ENCODE measurements at regions of chr12 and their contacts with region 1.

Region 1: GRCh38 chr12:93025145-93025805 is 96.2 kb upstream of the EEA1 start:
- DNase-seq: peak; percentile 28 to 74 (median 44)
- ATAC-seq: peak; percentile 82
- H3K4me3 ChIP-seq: no peak overlapping the region
- H3K27ac ChIP-seq: no peak overlapping the region
- H3K4me1 ChIP-seq: peaks cover 0 to 23% of the 10 kb centered on the region in 2 experiments; a peak in 3 of 5 replicates
- H3K27me3 ChIP-seq: no peaks in the 10 kb centered on the region
- CTCF ChIP-seq: peak; percentile 58 to 82 (median 66)
- EP300 ChIP-seq: no peak
- POLR2A ChIP-seq: no peak
- RAD21 ChIP-seq: peak; percentile 78 to 93

Region 2: GRCh38 chr12:93043877-93044209 is 18.6 kb after region 1 on chr12:
- CTCF ChIA-PET with region 1: no interaction called
- POLR2A ChIA-PET with region 1: no interaction called
- in situ Hi-C with region 1: no loop called
- intact Hi-C with region 1: loop called (anchors 2 kb)
- DNase-seq: peak; percentile 22 to 69 (median 44)
- ATAC-seq: peak; percentile 81
- H3K4me3 ChIP-seq: no peak overlapping the region
- H3K27ac ChIP-seq: peak overlapping the region; percentile 40; the same call in 1 of the 3 replicates
- H3K4me1 ChIP-seq: peaks cover 0 to 19% of the 10 kb centered on the region in 2 experiments; a peak in 4 of 5 replicates
- H3K27me3 ChIP-seq: no peaks in the 10 kb centered on the region; a peak in 1 of 5 replicates
- CTCF ChIP-seq: no peak
- EP300 ChIP-seq: peak; percentile 76
- POLR2A ChIP-seq: no peak
- RAD21 ChIP-seq: no peak

Region 3: DNA sequence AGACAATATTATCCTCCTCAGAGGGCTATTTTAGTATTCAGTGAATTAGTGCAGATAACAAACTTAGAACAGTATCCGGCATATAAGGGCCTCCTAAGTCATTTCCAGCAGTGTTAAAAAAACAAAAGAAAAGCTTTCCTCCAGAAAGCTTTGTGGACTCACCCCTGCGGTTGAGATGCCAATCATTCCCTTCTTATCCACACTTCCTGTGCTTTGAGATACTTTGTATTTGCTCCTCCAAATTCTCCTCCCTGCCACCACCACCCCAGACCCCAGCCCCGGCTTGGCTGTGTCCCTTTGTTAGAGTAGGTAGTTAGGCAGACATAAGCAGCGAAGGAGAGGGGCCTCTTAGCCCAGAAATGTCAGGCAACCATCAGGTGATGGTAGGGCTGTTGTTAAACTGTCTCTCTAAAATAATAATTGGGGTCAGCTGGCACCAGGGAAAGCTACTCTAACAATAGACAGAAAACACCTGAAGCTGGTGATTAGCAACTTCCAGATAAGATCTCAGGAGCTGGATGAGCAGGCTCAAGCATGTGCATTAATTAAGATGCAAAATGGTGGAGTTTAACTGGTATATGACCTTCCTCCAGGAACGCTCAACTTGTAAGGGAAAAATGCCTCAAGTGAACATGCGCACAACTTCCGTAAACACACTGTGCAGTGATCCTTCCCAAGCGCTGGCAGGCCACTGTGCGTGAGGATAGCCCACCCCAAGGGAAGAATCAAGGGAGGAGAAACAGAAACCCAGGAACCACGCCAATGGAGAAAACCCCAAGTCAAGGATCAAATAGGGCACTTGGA is 55.9 kb after region 1 on chr12:
- CTCF ChIA-PET with region 1: no interaction called
- POLR2A ChIA-PET with region 1: no interaction called
- in situ Hi-C with region 1: no loop called
- intact Hi-C with region 1: no loop called
- DNase-seq: no peak
- ATAC-seq: no peak
- H3K4me3 ChIP-seq: no peak overlapping the region
- H3K27ac ChIP-seq: no peak overlapping the region
- H3K4me1 ChIP-seq: peaks cover 0 to 10% of the 10 kb centered on the region in 2 experiments; a peak in 1 of 5 replicates
- H3K27me3 ChIP-seq: no peaks in the 10 kb centered on the region
- CTCF ChIP-seq: no peak
- EP300 ChIP-seq: no peak
- POLR2A ChIP-seq: no peak
- RAD21 ChIP-seq: no peak

Region 4: GRCh38 chr12:93419388-93420034 is 394.2 kb after region 1 on chr12:
- CTCF ChIA-PET with region 1: interaction called, 6 read pairs
- POLR2A ChIA-PET with region 1: no interaction called
- in situ Hi-C with region 1: no loop called
- intact Hi-C with region 1: loop called (anchors 5 kb)
- DNase-seq: peak; percentile 34 to 53 (median 46)
- ATAC-seq: peak; percentile 77
- H3K4me3 ChIP-seq: no peak overlapping the region
- H3K27ac ChIP-seq: no peak overlapping the region
- H3K4me1 ChIP-seq: peaks cover 3 to 14% of the 10 kb centered on the region in 2 experiments; a peak in 2 of 5 replicates
- H3K27me3 ChIP-seq: no peaks in the 10 kb centered on the region
- CTCF ChIP-seq: peak; percentile 7 to 71 (median 27); a peak in 4 of 6 replicates
- EP300 ChIP-seq: no peak
- POLR2A ChIP-seq: no peak
- RAD21 ChIP-seq: peak; percentile 65 to 77

Measured in K562 (cell line).